ENCODE measurements at regions of chr18 and their contacts with region 1.

Region 1: DNA sequence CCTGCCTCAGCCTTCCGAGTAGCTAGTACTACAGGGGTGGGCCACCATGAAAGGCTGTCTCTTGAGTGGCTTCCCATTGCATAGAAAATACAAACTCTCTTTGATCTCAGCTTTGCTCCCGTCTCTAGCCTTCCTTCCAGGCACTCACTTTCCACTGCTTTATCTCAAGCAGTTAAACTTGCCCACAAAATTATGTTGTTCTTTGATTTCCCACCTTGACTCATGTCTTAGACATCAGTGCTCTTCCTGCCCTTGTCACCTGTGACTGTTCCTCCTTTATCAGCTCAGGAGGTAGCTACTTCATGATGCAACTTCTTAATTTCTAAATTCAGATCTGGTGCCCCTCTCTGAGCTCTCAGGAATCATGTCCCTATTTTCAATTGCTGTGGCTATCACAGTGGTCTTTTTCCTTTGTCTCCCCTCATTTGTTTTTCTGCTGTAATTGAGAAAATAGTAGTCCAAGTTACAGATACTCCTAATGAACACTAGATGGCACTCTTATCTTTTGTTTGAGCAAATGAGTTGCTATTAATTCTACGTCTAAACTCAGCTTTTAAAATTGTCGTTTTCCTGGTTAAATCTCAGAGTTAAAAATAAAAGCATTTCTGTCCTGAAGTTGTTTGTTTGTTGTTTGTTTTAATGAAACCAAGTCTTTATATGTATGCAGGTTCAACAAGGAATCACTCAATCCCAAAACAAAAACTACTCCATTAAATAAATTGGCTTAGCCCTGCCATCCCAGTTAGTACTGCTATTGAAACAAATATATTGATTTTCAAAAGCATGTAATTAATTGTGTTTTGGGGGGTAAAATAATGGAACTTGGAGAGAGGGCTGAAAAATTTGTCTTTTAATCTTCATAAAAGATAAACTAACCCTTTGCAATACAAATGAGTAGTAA is 46.9 kb upstream of the GREB1L start:
- DNase-seq: no peak
- ATAC-seq: no peak

Region 2: GRCh38 chr18:21230436-21230835 is 35.3 kb after region 1 on chr18:
- intact Hi-C with region 1: no loop called
- DNase-seq: no peak
- ATAC-seq: no peak

Region 3: DNA sequence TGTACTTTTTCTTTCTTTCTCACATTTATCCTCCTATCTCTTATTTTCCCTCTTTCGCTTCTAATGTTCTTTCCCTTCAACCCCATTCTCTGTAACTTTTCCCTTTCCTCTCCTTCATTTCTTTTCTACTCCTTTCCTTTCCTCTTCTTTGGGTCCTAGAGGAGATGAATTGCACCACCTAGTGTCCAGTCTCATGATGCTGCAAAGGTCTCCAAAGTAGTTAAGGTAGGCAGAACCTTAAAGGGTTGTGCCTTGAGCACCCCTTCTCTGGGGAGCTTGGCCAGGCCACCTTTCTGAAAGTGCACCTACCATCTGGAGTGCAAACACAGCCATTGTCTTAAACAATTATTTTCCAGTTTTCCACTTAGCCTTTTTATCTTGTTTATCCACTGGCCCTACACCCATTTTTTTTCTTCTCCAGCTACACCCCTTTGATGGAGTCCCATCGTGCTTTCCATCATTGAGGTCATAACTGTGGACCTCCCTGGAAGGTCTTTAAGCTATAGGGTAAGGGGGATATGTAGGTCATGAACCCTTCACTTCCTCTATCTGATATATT is 249.4 kb after region 1 on chr18:
- intact Hi-C with region 1: loop called (anchors 2 to 5 kb)
- DNase-seq: no peak
- ATAC-seq: peak; percentile 62 to 67